HEK293T (cell line): ENCODE measurements at regions of chr14 and their contacts with region 1.

Region 1: GRCh38 chr14:66495218-66496098 is 9.3 kb downstream of the CCDC196 start:
- DNase-seq: peak; percentile 56

Region 2: DNA sequence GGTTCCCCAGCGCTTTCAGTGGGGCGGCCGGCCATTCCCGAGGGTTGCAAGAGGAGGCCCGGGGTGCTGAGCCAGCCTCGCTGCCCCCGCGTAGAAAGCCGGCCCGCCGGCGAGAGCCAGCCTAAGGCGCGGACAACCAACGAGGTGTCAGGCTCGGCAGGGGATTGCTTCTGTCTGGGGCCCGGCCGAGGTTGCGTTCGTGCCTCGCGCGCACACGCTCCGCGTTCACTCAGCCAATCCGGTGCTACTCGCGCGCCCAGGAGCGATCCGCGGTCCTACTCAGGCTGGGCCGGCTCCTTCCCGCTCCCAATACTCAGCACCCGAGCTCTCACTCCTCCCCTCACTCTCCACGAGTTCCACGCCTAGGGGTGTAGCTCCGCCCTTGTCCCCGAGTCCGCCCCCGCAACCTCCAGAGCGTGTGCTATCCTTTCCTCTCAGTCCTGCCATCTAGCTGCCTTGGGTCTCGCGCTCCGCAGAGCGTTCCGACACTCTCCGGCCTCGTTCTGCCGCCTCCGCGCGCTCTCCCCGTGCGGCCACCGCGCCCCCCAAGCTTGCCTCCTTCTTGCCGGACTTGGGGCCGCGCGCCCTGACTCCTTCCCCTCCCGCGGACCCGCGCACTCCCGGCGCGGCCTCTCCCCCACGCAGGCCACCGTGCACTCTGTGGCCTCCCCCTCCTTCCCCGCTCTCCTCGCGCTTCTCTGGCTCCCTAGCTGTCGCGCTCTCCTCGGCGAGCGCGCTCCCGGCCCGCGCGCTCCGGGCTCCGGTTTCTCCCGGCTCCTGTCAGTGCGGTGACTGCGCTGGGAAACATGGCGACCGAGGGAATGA is 12.5 kb after region 1 on chr14 and contains the start of gene GPHN:
- CTCF ChIA-PET with region 1: no interaction called
- POLR2A ChIA-PET with region 1: interaction called, 16 read pairs
- DNase-seq: peak; percentile 87